ENCODE measurements at regions of chr6 and their contacts with region 1.

Region 1: DNA sequence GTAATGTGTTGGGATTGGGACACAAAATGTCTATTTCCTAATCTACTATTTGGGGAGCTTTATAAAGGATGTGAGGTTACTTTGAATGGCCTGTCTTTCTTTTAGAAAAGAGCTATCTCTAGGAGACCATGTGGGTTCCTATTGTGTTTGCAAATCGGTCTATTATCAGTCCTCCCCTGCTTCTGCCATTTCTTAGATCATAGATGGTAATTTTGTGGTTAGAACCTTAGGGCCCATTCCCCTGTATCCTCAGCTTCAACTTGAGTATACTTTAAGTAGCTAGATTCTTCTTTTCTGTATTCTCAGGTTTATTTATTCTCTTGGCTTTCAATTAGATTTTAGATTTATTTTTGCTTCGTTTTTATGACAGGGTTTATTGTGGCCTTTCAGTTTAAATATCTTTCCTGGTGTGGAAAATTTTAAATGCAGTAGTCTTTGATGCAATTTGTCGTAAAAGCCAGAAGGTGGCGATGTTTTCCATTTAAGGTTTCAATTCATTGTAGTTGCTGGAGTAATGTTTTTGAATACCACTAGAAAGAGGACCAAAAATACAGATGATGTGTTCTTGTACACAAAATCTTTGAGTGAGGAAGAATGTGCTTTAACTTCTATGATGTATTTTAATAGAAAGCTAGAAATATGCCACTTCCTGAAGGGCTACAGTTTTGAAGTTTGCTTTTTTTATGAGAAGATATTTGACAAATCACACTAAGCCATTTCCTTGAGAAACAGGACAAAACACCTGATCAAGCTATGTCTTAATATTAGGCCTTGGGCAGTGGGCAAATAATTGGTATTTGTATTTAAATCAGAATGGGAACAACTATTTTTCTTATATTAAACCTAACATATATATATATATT is 20.3 kb downstream of the TBPL1 start:
- DNase-seq: no peak
- H3K4me3 ChIP-seq: no peak overlapping the region
- H3K4me3 Mint-ChIP-seq: no peak overlapping the region
- H3K27ac Mint-ChIP-seq: no peak overlapping the region
- H3K4me1 ChIP-seq: no peaks in the 10 kb centered on the region
- H3K4me1 Mint-ChIP-seq: peaks cover 3% of the 10 kb centered on the region
- H3K27me3 ChIP-seq: no peaks in the 10 kb centered on the region
- H3K27me3 Mint-ChIP-seq: no peaks in the 10 kb centered on the region
- CTCF ChIP-seq: peak; percentile 40 to 58

Region 2: GRCh38 chr6:133952815-133953633 is 20.3 kb before region 1 on chr6 and contains the start of gene TBPL1:
- CTCF ChIA-PET with region 1: no interaction called
- POLR2A ChIA-PET with region 1: no interaction called
- intact Hi-C with region 1: loop called (anchors 2 kb)
- DNase-seq: peak; percentile 88 to 91
- H3K4me3 ChIP-seq: peak within 1 kb of the TSS; percentile 76
- H3K4me3 Mint-ChIP-seq: peak within 1 kb of the TSS; percentile 96
- H3K27ac Mint-ChIP-seq: peak within 1 kb of the TSS; percentile 86
- H3K4me1 ChIP-seq: peaks cover 5% of the 10 kb centered on the region; the same call in 1 of the 2 replicates
- H3K4me1 Mint-ChIP-seq: peaks cover 7% of the 10 kb centered on the region
- H3K27me3 ChIP-seq: no peaks in the 10 kb centered on the region
- H3K27me3 Mint-ChIP-seq: peaks cover 6% of the 10 kb centered on the region
- CTCF ChIP-seq: no peak
- total RNA-seq, gene TBPL1: 19.3 and 23.6 TPM in 2 replicates

Region 3: GRCh38 chr6:134063966-134064445 is 90.7 kb after region 1 on chr6:
- CTCF ChIA-PET with region 1: interaction called, 12 read pairs
- POLR2A ChIA-PET with region 1: no interaction called
- intact Hi-C with region 1: loop called (anchors 1 kb)
- DNase-seq: peak; percentile 70 to 77
- H3K4me3 ChIP-seq: no peak overlapping the region
- H3K4me3 Mint-ChIP-seq: no peak overlapping the region
- H3K27ac Mint-ChIP-seq: no peak overlapping the region
- H3K4me1 ChIP-seq: peaks cover 10% of the 10 kb centered on the region
- H3K4me1 Mint-ChIP-seq: peaks cover 11% of the 10 kb centered on the region
- H3K27me3 ChIP-seq: no peaks in the 10 kb centered on the region
- H3K27me3 Mint-ChIP-seq: no peaks in the 10 kb centered on the region
- CTCF ChIP-seq: peak; percentile 83 to 94

Measured in Caco-2 (cell line).